ENCODE measurements at regions of chr2 and their contacts with region 1.

Region 1: DNA sequence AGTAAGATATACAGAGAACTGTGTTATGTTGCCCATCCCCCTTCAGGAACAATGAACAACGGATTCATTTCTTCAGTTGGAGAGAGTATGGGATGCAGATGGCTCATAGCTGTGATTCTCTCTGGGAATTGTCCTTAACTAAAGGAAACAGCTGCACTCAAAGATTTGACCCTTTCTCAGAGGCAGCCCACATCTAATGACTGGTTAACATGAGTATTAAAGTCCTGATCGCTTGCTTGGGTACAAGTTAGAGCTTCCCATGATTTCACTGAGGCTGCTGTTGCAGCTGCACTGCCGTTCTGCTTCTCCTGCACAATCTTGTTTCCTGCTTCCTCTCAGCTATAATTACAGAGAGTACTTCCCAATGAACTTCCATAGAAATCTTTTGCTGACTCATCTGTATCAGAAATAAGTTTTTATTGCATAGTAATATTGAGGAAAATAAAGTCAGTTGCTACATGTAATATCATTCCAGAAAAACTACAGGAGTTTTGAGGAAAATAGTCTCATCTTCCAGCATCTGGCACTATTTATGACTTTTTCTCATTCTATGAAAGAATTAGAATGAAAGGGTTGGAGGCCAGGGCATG is 12.8 kb upstream of the SCN9A start:
- DNase-seq: no peak
- ATAC-seq: no peak
- H3K4me3 ChIP-seq: no peak overlapping the region
- H3K27ac ChIP-seq: no peak overlapping the region
- H3K4me1 ChIP-seq: no peaks in the 10 kb centered on the region
- H3K27me3 ChIP-seq: peaks cover 0 to 2% of the 10 kb centered on the region in 2 donors

Region 2: DNA sequence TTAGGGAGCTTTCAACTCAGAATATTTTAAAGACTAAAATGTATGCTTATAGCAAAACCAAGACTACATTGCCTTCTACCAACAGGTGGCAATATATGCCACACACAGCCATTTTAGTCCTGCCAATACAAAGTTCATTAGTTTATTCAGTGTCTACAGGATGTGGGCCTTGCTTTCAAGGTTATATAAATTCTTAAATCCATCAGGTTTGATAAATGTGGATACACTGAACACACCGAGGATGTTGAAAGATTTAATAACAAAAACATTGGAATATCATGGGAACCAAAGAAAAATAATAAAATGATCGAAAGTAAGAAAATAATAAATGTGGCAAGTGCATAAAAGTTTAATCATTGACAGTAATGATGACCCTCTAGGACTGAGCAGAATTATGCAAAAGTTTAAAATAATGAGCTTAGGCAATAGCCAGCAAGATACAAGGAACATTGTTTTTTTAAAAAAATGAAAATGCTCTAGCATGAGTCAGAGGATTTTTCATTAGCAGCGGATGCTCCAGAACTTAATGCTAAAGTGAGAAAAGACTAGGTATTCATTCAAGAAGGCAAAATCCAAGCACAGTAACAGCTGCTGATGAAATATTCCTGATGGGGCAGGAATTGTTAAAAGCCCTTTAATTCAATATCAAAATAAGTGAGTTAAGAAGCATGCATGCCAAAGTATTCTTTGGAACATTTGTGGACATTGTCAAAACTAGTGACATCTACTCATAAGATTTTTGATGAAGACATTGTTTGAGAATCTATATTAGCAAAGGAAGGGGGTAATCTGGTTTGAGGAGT is 27.0 kb before region 1 on chr2:
- intact Hi-C with region 1: loop called in 1 of 2 experiments (anchors 2 kb)
- DNase-seq: no peak
- ATAC-seq: no peak
- H3K4me3 ChIP-seq: no peak overlapping the region
- H3K27ac ChIP-seq: no peak overlapping the region
- H3K4me1 ChIP-seq: no peaks in the 10 kb centered on the region
- H3K27me3 ChIP-seq: no peaks in the 10 kb centered on the region

Region 3: DNA sequence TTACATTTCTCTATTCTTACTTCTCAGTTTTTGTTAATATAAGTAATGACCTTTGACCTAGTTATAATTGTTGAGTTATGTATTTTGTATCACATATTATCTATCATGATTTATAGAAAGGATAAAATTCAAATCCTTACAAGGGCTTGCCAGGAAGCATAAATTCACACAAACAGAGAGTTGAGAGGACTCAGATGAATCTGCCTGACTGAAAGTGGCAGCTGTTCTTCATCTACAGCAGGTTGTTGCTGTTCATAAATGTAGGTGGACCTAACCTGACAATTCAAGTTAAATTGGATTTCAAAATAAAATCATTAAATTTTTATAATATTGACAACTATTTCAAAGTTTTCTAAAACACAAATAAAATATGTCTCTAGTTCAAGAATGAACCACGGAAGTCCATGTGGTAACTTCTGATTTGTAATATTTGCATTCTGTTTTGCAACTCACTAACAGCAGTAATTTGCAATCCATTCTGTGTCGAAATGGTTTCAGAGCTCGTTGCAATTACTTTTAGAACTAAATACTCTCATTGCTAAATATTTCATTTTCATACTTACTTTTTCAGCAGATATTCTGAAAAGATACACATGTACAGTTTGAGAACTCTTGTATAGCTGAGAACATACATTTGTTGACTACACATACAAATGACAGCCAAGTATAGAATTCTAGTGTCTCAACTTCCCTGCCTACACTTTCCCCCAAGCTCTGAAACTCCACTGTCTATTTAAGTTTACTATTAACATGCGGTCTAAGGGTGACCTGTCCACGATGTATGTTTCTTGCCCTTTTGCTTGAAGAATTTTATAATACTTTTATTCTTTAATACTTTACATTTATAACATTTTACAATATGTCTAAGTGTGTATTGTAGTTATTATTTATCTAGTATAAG is 79.8 kb after region 1 on chr2:
- intact Hi-C with region 1: no loop called
- DNase-seq: no peak
- ATAC-seq: no peak
- H3K4me3 ChIP-seq: no peak overlapping the region
- H3K27ac ChIP-seq: no peak overlapping the region
- H3K4me1 ChIP-seq: no peaks in the 10 kb centered on the region
- H3K27me3 ChIP-seq: no peaks in the 10 kb centered on the region

Measured in aorta (tissue), 5 donors.